AG04449 (cell line): ENCODE measurements at regions of chr22 and their contacts with region 1.

Region 1: GRCh38 chr22:39490135-39490798 is 11.8 kb upstream of the MIEF1 start:
- DNase-seq: no peak
- H3K4me3 ChIP-seq: no peak overlapping the region
- CTCF ChIP-seq: no peak

Region 2: DNA sequence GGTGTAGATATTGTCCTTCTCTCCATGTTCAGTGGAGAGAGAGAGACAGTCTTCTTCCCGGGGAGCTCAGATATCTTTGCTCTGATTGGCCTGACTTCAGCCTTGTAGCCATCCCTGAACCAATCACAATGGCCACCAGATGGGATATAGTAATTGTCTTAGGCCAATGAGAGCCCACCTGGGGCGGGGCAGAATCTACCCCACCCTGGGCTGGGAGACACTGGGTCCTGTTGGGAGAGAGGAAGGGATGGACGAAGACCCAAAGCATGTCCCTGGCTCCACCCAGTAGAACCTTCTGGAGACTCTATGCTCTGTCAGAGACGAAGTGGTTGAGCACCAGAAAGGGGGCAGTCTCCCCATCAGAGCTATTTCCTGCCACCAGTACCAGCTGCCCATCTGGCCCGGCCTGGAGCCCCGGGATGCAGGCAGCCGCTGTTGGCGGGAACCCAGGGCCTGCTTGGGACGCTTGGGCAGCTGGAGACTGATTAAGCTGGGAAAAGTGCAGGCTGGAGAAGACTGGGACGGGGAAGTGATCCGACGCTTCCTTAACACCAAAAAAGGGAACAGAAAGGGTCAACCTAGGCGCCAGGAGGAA is 306.2 kb before region 1 on chr22:
- CTCF ChIA-PET with region 1: no interaction called
- POLR2A ChIA-PET with region 1: no interaction called
- DNase-seq: no peak
- H3K4me3 ChIP-seq: no peak overlapping the region
- CTCF ChIP-seq: no peak

Region 3: GRCh38 chr22:39478441-39479264 is 11.6 kb before region 1 on chr22:
- CTCF ChIA-PET with region 1: interaction called, 132 read pairs
- POLR2A ChIA-PET with region 1: interaction called, 3 read pairs
- DNase-seq: no peak
- H3K4me3 ChIP-seq: no peak overlapping the region
- CTCF ChIP-seq: no peak

Region 4: GRCh38 chr22:39514373-39514973 is 24.2 kb after region 1 on chr22:
- CTCF ChIA-PET with region 1: interaction called, 88 read pairs
- POLR2A ChIA-PET with region 1: interaction called, 15 read pairs
- DNase-seq: no peak
- H3K4me3 ChIP-seq: no peak overlapping the region
- CTCF ChIP-seq: peak; percentile 67

Region 5: DNA sequence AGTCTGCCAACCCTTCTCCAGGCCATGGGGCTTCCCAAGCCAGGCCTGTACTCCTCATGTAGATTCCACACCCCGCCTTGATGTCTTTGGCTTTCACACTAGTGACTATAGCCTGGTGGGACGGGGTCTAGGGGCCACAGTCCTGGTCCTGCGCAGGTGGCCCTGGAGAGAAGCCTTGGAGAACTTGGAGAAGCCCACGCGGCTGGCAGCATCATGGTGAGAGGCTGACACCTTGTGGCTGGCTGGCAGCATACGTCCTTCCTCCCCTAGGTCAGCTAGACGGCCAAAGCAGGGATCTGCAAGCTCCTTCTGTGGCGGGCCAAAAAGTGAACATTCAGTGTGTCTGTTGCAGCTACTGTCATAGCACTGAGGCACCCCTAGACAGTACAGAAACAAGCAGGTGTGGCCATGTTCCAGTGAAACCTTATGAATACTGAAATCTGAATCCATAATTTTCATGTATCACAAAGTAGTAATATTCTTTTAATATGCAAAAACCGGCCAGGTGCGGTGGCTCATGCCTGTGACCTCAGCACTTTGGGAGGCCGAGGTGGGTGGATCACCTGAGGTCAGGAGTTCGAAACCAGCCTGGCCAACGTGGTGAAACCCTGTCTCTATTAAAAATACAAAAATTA is 546.4 kb after region 1 on chr22:
- CTCF ChIA-PET with region 1: interaction called, 12 read pairs
- POLR2A ChIA-PET with region 1: no interaction called
- DNase-seq: no peak
- H3K4me3 ChIP-seq: no peak overlapping the region
- CTCF ChIP-seq: peak; percentile 90